ENCODE measurements at regions of chr1 and their contacts with region 1.

Region 1: GRCh38 chr1:54955359-54955758 is 25.1 kb upstream of the TMEM61 start:
- DNase-seq: no peak
- CTCF ChIP-seq: no peak

Region 2: GRCh38 chr1:54996359-54996868 is 41.1 kb after region 1 on chr1:
- in situ Hi-C with region 1: loop called (anchors 5 kb)
- DNase-seq: peak; percentile 95
- CTCF ChIP-seq: peak; percentile 89

Measured in GM13977 (cell line).